ENCODE measurements at regions of chr1 and their contacts with region 1.

Region 1: GRCh38 chr1:26321315-26322041 is 3.7 kb downstream of the CD52 start:
- DNase-seq: peak; percentile 92 to 94 (median 92)
- ATAC-seq: peak; percentile 96
- H3K4me3 ChIP-seq: no peak overlapping the region
- H3K27ac ChIP-seq: no peak overlapping the region
- H3K4me1 ChIP-seq: peaks cover 4% of the 10 kb centered on the region
- H3K27me3 ChIP-seq: no peaks in the 10 kb centered on the region
- CTCF ChIP-seq: peak; percentile 72 to 96 (median 91)
- POLR2A ChIP-seq: no peak

Region 2: DNA sequence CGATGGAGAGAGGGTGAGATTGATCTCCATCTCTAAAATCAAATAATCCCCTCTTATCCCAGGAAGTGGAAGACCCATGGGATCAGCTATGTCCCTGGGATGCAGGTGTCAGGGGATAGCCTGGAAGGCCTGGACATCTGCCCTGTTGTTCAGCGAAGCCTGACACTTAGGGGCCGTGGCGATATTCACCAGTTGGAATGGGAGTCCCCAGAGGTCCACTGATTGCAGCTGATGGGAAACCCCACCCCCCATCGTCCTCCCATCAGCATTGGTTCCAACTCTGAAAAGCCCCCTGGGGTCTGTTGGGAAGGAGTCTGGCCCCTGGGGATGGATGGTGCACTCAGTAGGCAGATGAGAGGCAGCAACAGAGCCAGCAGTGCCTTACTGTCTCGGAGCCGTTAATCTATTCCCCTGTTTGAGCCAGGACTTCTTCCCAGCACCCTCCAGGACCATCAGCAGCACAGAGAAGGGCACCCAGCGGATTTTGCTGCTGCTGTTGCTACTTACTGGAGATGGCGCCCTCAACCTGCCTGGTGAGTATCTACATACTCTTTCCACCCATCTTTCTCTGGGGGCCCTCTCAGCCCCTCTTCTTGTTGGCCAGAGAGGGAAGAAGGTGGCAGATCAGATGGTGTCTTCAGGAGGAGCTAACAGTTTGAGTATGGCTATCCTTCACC is 117.7 kb before region 1 on chr1:
- intact Hi-C with region 1: no loop called
- DNase-seq: no peak
- ATAC-seq: no peak
- H3K4me3 ChIP-seq: no peak overlapping the region
- H3K27ac ChIP-seq: no peak overlapping the region
- H3K4me1 ChIP-seq: no peaks in the 10 kb centered on the region
- H3K27me3 ChIP-seq: no peaks in the 10 kb centered on the region
- CTCF ChIP-seq: no peak
- POLR2A ChIP-seq: no peak

Region 3: DNA sequence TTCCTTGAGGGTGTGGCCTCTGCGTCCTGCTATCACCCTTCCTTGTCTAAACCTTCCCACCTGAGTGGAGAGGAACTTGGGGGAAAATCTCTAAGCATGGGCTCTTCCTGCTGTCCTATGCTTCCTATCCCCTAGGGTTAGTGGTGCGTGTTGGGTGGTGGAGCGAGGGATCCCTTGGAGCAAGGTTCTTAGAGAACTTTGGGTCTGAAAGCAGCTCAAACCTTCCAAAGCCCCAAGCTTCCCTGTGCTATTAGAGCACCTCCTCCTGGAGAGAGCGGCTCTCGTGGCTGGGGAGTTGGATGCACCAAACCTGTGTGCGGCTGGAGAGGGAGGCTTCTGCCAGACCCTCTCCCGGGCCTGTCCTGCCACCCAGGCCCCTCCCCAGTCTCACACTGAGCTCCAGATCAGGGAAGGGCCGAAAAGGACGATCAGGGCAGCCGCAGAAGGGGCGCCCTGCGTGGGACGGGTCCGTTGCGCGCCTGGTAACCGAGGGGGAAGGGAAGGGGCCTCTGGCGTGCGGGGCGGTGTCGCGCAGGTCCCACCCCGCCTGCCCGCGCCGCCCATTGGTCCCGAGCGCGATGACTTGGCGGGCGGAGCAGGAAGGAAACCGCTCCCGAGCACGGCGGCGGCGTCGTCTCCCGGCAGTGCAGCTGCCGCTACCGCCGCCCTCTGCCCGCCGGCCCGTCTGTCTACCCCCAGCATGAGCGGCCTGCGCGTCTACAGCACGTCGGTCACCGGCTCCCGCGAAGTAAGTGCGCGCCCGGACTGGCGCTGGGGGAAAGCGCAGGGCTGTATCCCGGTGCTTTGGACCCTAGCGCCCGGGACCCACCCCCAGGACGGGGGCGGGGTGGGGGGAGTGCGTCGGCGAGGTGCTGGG is 41.8 kb before region 1 on chr1 and contains the start of gene SH3BGRL3:
- intact Hi-C with region 1: loop called (anchors 5 kb)
- DNase-seq: peak; percentile 90 to 93 (median 92)
- ATAC-seq: peak; percentile 82
- H3K4me3 ChIP-seq: peak within 1 kb of the TSS; percentile 20 to 99
- H3K27ac ChIP-seq: peak within 1 kb of the TSS; percentile 95 to 97 (median 95)
- H3K4me1 ChIP-seq: peaks cover 69% of the 10 kb centered on the region
- H3K27me3 ChIP-seq: no peaks in the 10 kb centered on the region
- CTCF ChIP-seq: peak; percentile 12 to 48 (median 38)
- POLR2A ChIP-seq: peak; percentile 98 to 99 (median 98)
- total RNA-seq, gene SH3BGRL3: 38.2 to 43.1 TPM

Region 4: DNA sequence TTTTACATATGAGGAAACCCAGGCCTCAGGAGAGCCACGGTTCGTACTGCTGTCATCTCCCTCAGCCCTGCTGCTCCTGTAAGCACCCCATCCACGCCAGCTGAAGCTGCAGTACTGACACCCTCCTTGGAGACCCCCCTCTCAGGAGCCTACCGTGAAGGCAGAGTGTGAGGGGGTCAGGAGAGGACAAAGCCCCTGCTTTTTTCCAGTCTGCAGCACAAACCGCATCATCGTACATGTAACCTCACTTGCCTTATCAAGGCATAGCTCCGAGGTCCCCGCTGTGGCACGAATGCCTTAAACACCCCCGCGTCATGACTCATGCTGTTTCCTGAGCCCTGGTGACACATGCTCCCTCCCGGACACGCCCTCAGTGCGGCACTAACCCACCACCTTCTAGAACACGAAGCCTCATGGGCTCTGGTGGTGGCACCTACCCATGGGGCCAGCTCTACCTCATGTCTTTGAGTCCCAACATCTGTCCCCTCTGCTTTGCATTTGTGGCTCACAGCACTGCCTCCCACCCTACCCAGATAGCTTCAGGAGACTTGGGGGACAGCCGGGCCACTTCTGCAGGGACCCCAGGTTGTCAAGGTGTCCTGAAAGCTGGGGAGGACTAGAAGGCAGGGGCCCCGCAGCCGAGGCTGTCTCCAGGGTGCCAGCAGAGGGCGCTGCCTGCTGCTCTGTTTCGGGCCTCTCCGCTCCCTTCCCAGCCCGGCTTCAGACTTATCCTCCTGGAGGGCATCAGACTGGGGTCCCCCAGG is 36.7 kb before region 1 on chr1:
- intact Hi-C with region 1: loop called (anchors 5 kb)
- DNase-seq: peak; percentile 65 to 86 (median 76)
- ATAC-seq: peak; percentile 44
- H3K4me3 ChIP-seq: no peak overlapping the region
- H3K27ac ChIP-seq: peak overlapping the region in 2 of 4 donors; percentile 24 to 42
- H3K4me1 ChIP-seq: peaks cover 34% of the 10 kb centered on the region
- H3K27me3 ChIP-seq: no peaks in the 10 kb centered on the region
- CTCF ChIP-seq: peak; percentile 49 to 66 (median 61)
- POLR2A ChIP-seq: no peak